PC-9 (cell line): ENCODE measurements at regions of chr9 and their contacts with region 1.

Region 1: GRCh38 chr9:96644137-96644536 is 11.0 kb downstream of the PRXL2C start:
- DNase-seq: peak in 1 of 2 experiments; percentile 53
- H3K4me3 ChIP-seq: no peak overlapping the region
- H3K27ac ChIP-seq: no peak overlapping the region
- H3K4me1 ChIP-seq: no peaks in the 10 kb centered on the region
- H3K27me3 ChIP-seq: no peaks in the 10 kb centered on the region
- CTCF ChIP-seq: no peak

Region 2: DNA sequence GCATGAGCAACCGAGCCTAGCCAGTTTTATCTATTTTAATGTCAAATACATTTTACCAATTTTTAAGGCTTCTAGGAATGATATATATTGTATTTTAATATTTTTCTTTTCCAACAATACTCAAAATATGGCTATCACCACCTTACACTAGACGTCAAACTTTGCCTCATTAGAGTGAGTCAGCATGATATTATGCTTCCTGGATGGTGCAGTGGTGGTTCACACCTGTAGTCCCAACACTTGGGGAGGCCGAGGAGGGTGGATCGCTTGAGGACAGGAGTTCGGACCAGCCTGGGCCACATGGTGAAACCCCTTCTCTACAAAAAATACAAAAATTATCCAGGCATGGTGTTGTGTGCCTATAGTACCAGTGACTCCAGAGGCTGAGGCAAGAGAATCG is 17.2 kb before region 1 on chr9:
- CTCF ChIA-PET with region 1: interaction called, 23 read pairs
- POLR2A ChIA-PET with region 1: no interaction called
- intact Hi-C with region 1: no loop called
- DNase-seq: peak; percentile 38 to 66
- H3K4me3 ChIP-seq: peak overlapping the region; percentile 27; the same call in 1 of the 2 replicates
- H3K27ac ChIP-seq: peak overlapping the region; percentile 94
- H3K4me1 ChIP-seq: peaks cover 22% of the 10 kb centered on the region
- H3K27me3 ChIP-seq: no peaks in the 10 kb centered on the region
- CTCF ChIP-seq: no peak